Motor neuron (in vitro differentiated cells): ENCODE measurements at regions of chr9 and their contacts with region 1.

Region 1: DNA sequence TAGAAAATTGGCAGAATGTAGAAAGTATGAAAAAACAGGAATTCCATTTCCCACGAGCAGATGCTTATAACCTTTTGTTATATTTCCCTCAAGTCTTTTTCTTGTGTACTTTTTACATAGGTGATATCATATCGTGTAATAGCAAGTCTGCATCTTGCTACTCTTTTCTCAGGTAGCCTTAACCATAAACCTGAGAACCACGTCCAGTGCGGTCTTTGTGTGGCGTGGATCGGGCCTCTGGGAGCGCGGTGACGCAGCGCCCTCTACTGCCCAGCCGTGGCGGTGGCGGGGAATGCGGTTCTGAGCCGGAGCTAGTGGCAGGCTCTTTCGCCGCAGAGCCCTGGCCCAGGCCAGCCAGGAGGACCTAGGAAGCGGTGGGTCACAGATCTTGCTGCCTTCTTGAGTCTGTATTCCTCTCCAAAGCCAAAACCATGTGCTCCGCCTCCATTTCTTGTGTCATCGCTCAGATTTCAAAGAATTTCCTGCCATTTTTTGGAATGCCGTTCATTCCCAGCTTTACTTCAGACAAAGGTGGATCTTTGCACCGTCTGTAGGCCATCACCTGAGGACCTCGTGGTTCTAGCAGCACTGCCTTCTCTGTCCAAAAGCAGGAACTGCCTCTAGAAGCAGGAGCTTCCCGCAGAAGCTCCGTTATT is 71.9 kb downstream of the MVB12B start:
- ATAC-seq: peak; percentile 83 to 97 (median 93)
- H3K4me3 ChIP-seq: no peak overlapping the region
- H3K27ac ChIP-seq: no peak overlapping the region
- H3K4me1 ChIP-seq: peaks cover 2 to 8% of the 10 kb centered on the region in 2 donors

Region 2: DNA sequence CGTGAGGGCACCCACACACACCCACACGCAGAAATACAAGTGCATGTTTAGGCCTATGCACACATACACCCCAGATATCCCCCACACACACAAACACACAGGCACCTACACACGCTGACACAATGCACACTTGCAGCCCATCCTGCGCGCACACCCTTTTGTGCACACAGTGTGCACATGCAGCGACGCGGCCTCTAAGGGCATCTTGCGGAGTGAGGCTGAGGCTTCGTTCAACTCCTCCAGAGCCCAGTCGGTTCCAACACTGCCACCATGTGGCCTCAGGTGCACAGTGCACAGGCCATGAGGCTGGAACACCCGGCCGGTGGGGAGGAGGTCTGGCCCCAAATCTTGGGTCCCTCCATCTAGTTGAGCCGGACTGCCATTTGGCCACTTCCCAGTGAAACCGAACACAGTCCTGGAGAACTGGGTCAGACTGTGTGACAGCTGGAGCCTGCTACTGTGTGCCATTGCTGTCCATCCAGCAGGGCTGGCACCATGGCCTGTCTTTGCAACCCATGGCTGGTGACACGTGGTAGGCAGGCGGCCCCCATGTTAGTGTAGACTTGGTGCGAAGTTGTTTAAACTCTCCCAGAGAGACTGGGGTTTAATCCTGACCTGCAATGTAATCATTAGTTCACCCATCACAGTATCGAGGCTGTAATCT is 169.6 kb before region 1 on chr9:
- in situ Hi-C with region 1: loop called in 1 of 9 experiments (anchors 25 kb)
- ATAC-seq: peak; percentile 87 to 99 (median 94)
- H3K4me3 ChIP-seq: no peak overlapping the region
- H3K27ac ChIP-seq: peak overlapping the region in 1 of 2 donors; percentile 89
- H3K4me1 ChIP-seq: peaks cover 26 to 30% of the 10 kb centered on the region in 2 donors